Right lobe of liver (tissue), 6 donors: ENCODE measurements at regions of chr2 and their contacts with region 1.

Region 1: GRCh38 chr2:73085691-73086360 is 14.3 kb upstream of the SFXN5 start:
- DNase-seq: peak; percentile 86 to 88 (median 87)
- ATAC-seq: peak; percentile 88 to 95 (median 90)
- H3K4me3 ChIP-seq: no peak overlapping the region
- H3K27ac ChIP-seq: no peak overlapping the region
- H3K4me1 ChIP-seq: peaks cover 0 to 7% (median 1%) of the 10 kb centered on the region in 4 donors
- H3K27me3 ChIP-seq: no peaks in the 10 kb centered on the region
- CTCF ChIP-seq: peak; percentile 91 to 97 (median 96)
- POLR2A ChIP-seq: no peak

Region 2: GRCh38 chr2:72892506-72893173 is 193.2 kb before region 1 on chr2:
- intact Hi-C with region 1: loop called in 1 of 2 experiments (anchors 10 kb)
- DNase-seq: peak; percentile 74 to 84 (median 76)
- ATAC-seq: peak; percentile 76 to 83 (median 80)
- H3K4me3 ChIP-seq: no peak overlapping the region
- H3K27ac ChIP-seq: no peak overlapping the region
- H3K4me1 ChIP-seq: peaks cover 0 to 22% (median 9%) of the 10 kb centered on the region in 4 donors
- H3K27me3 ChIP-seq: no peaks in the 10 kb centered on the region
- CTCF ChIP-seq: peak; percentile 64 to 82 (median 80)
- POLR2A ChIP-seq: no peak

Region 3: DNA sequence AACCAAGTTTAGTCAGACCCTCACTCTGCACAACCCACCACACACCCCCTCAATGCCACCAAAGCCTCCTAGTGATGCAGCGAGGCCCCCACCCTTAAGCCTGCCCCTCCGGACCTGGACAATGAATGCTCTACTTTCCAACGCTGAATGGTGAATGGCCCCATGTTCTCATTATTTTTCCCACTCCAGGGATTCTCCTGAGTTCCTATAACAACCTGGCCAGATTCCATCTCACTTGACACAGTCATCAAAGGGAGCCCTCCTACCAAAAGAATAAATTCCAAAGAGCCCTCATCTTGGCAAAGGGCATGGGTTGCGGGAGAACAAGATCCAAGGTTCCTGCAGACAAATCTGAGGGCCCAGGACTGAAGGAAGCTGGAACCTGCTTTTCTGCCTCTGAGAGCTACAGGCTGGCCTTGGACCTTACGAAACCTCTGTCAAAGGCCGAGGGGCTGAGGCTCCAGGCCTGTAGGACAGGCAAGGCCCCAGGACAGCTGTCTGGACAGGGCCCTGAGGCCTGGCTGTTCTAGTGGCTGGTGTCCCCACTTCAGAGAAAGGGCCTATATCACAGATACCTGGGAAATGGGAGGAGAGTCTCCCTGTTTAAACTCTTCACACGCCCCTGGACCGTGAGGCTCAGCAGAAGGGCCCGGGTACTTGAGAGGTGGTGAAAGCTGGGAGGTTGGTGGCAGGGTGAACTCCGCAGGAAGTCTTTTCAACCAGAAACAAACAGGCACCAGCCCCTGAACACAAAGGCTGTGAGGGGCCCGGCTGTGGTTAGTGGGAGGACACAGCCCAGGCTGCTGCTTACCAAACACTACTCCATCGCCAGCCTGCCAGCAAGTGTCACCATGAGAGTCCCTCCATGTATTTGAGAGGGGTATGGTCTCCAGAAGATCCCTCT is 41.6 kb before region 1 on chr2:
- intact Hi-C with region 1: no loop called
- DNase-seq: no peak
- ATAC-seq: peak; percentile 58 to 86 (median 68)
- H3K4me3 ChIP-seq: no peak overlapping the region
- H3K27ac ChIP-seq: peak overlapping the region in 1 of 3 donors; percentile 37
- H3K4me1 ChIP-seq: peaks cover 0 to 38% (median 4%) of the 10 kb centered on the region in 4 donors
- H3K27me3 ChIP-seq: no peaks in the 10 kb centered on the region
- CTCF ChIP-seq: no peak
- POLR2A ChIP-seq: no peak

Region 4: DNA sequence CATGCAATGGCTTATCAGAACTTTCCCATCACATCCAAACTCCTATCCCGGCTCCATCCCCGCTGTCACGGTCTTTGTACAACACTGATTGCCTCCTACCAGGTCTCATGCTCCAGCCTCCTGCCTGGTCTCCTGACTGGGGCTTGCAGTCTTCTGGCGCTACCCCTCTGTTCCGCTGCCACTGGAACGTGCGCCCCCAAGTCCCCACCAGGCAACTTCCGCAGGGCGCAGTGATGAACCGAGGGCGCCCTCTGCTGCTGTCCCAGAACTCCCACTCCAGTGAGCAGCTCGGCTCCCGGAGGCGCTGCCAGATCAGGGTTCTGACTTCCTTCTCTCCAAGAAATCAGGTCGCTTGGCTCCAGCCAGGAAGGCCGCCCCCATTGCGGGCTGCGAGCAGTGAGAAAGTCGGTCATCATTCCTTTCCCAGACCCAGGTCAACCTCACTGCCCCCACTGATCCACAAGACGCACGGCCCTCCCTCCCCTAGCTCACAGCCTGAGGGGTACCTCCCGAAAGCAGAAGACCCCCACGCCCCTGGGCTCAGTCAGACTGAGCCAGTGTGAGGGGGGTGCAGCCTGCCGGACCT is 70.8 kb after region 1 on chr2:
- intact Hi-C with region 1: loop called (anchors 5 kb)
- DNase-seq: peak; percentile 59 to 74 (median 73)
- ATAC-seq: peak; percentile 87 to 99 (median 92)
- H3K4me3 ChIP-seq: no peak overlapping the region
- H3K27ac ChIP-seq: no peak overlapping the region
- H3K4me1 ChIP-seq: peaks cover 0 to 6% (median 0%) of the 10 kb centered on the region in 4 donors
- H3K27me3 ChIP-seq: no peaks in the 10 kb centered on the region
- CTCF ChIP-seq: peak; percentile 60 to 79 (median 72)
- POLR2A ChIP-seq: no peak

Region 5: DNA sequence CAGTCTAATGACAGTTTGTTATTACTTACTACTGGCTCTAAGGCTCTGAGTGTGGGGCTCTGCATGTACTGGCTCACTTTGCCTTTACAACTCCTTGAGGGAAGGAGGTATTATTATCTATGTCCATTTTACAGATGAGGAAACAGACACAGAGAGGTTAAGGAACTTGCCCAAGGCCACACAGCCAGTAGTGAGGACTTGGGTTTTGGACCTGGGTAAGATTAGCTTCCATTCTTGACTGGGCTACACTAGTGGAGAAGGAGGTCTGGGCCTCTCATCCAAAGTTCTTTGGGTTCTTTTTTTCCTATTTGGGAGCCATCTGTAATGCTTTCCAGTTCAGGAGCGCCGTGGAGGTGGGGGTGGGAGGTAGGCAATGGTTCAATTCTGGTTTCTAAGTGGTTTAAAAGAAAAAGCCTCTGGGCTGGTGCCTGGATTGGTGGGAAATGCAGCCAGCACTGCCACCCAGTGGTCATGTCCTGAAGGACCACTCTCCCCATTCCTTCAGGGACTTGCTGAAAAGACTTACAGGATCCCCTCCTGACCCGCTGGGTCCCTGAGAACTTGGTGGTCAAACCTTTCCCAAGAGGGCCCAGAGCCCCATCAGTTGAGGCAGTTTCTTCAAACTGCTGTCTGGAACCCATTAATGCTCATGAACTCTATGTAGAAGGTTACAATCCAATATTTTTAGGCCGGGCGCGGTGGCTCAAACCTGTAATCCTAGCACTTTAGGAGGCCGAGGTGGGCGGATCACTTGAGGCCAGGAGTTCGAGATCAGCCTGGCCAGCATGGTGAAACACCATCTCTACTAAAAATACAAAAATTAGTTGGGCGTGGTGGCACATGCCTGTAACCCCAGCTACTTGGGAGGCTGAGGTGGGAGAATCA is 77.9 kb after region 1 on chr2:
- intact Hi-C with region 1: loop called (anchors 5 kb)
- DNase-seq: peak in 2 of 3 donors; percentile 56 to 67
- ATAC-seq: peak; percentile 91 to 96 (median 95)
- H3K4me3 ChIP-seq: no peak overlapping the region
- H3K27ac ChIP-seq: no peak overlapping the region
- H3K4me1 ChIP-seq: no peaks in the 10 kb centered on the region
- H3K27me3 ChIP-seq: no peaks in the 10 kb centered on the region
- CTCF ChIP-seq: peak; percentile 83 to 90 (median 86)
- POLR2A ChIP-seq: no peak